ENCODE measurements at regions of chr6 and their contacts with region 1.

Region 1: DNA sequence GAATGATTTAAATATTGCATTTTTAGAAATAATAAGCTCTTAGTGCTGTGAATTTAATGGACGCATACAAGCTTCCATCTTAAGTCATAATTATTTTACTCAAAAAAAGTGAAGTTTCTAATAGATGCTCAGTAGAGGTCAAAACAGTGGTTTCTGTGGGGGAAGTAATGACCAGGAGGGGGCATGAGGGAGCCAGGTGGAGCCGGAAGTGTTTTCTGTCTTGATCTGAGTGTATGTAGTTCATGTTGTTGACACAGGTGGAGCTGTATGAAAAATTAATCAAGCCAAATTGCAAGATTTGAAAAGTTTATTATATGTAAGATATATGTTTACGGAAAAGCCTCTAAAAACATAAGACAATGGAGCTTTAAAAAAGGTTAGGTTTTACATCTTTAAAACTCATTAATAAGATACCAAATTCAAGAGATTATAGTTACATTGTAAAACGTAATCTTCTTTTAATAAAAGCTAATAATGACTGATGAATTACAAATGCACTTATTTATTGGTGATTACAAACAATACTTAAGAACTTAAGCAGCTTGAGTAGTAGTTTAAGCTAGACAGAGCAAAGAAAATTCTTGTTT is 68.0 kb downstream of the PLAGL1 start:
- DNase-seq: peak; percentile 30
- ATAC-seq: peak; percentile 99
- H3K4me3 ChIP-seq: no peak overlapping the region
- H3K27ac ChIP-seq: no peak overlapping the region
- H3K4me1 ChIP-seq: peaks cover 5% of the 10 kb centered on the region; the same call in 1 of the 2 replicates
- H3K27me3 ChIP-seq: no peaks in the 10 kb centered on the region
- CTCF ChIP-seq: peak; percentile 77 to 85 (median 80)
- EP300 ChIP-seq: no peak
- POLR2A ChIP-seq: no peak
- RAD21 ChIP-seq: peak; percentile 59

Region 2: DNA sequence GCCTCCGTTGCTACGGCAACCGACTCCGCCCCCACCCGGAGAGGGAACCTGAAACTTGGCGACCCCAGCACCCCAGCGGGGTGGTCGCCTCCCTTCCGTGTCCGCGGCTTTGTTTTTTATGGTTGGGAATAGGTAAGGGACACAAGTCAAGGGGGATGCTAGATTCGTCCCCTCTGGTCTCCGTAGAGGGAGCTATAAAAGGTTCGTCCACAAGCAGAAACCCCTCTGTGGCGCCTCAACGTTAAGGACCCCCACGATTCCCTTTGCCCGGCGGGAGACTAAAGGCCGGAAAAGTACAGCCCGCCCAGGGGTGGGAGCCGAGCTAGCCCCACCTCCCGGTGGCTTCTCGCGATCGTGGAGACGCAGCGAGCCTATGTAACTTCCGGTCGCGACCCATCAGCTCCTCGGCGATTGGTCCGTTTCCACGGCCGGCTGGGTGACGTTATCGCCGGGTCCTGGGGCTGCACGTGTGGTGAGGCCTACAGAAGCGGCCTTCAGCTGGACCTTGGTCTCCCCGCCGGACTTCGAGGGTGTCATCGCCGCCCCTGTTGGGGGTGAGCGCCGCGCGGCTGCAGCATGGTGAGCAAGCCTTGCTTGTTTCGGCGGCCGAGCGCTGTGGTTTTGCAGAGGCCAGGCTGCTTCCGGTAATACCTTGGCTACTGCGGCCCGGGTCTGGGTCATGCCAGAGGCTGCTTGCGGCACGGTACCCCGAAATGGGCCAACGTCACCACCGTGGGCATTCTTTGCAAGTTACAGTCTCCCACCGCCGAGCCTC is 97.0 kb before region 1 on chr6 and contains the start of gene LTV1:
- CTCF ChIA-PET with region 1: interaction called, 11 read pairs
- POLR2A ChIA-PET with region 1: no interaction called
- RAD21 ChIA-PET with region 1: interaction called, 3 read pairs
- SMC1A ChIA-PET with region 1: interaction called, 4 read pairs
- in situ Hi-C with region 1: no loop called
- intact Hi-C with region 1: no loop called
- DNase-seq: peak; percentile 81
- ATAC-seq: peak; percentile 99
- H3K4me3 ChIP-seq: peak within 1 kb of the TSS; percentile 88
- H3K27ac ChIP-seq: peak within 1 kb of the TSS; percentile 78
- H3K4me1 ChIP-seq: no peaks in the 10 kb centered on the region
- H3K27me3 ChIP-seq: no peaks in the 10 kb centered on the region
- CTCF ChIP-seq: no peak
- EP300 ChIP-seq: no peak
- POLR2A ChIP-seq: peak; percentile 85
- RAD21 ChIP-seq: no peak
- polyA plus RNA-seq, gene LTV1: 33.9 to 57.9 TPM

Region 3: DNA sequence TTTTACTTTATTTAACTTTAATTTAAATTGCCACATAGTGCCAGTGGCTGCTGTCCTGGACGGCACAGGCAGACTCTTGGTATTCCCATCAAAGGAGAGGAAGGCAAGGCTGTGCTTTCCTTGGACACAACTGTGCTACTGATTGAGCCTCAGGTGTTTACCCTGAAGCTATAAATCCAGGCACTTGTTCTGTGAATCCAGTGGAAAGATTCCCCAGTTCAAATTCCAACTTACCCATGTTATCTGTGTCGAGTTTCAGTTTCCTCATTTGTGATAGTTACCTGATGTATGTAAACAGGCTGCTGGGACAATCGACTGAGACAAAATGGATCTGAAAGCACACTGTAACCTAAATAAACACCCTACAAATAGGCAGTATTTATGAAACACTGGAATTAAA is 10.8 kb after region 1 on chr6:
- CTCF ChIA-PET with region 1: interaction called, 35 read pairs
- POLR2A ChIA-PET with region 1: no interaction called
- RAD21 ChIA-PET with region 1: interaction called, 6 read pairs
- SMC1A ChIA-PET with region 1: interaction called, 12 read pairs
- in situ Hi-C with region 1: no loop called
- intact Hi-C with region 1: no loop called
- DNase-seq: no peak
- ATAC-seq: no peak
- H3K4me3 ChIP-seq: no peak overlapping the region
- H3K27ac ChIP-seq: no peak overlapping the region
- H3K4me1 ChIP-seq: no peaks in the 10 kb centered on the region; the same call in 1 of the 2 replicates
- H3K27me3 ChIP-seq: no peaks in the 10 kb centered on the region
- CTCF ChIP-seq: no peak
- EP300 ChIP-seq: no peak
- POLR2A ChIP-seq: no peak
- RAD21 ChIP-seq: no peak

Region 4: GRCh38 chr6:143961886-143962873 is 22.1 kb after region 1 on chr6:
- CTCF ChIA-PET with region 1: interaction called, 15 read pairs
- POLR2A ChIA-PET with region 1: interaction called, 4 read pairs
- RAD21 ChIA-PET with region 1: interaction called, 5 read pairs
- SMC1A ChIA-PET with region 1: interaction called, 3 read pairs
- in situ Hi-C with region 1: no loop called
- intact Hi-C with region 1: no loop called
- DNase-seq: no peak
- ATAC-seq: no peak
- H3K4me3 ChIP-seq: no peak overlapping the region
- H3K27ac ChIP-seq: no peak overlapping the region
- H3K4me1 ChIP-seq: no peaks in the 10 kb centered on the region
- H3K27me3 ChIP-seq: no peaks in the 10 kb centered on the region
- CTCF ChIP-seq: no peak
- EP300 ChIP-seq: no peak
- POLR2A ChIP-seq: no peak
- RAD21 ChIP-seq: no peak

Region 5: DNA sequence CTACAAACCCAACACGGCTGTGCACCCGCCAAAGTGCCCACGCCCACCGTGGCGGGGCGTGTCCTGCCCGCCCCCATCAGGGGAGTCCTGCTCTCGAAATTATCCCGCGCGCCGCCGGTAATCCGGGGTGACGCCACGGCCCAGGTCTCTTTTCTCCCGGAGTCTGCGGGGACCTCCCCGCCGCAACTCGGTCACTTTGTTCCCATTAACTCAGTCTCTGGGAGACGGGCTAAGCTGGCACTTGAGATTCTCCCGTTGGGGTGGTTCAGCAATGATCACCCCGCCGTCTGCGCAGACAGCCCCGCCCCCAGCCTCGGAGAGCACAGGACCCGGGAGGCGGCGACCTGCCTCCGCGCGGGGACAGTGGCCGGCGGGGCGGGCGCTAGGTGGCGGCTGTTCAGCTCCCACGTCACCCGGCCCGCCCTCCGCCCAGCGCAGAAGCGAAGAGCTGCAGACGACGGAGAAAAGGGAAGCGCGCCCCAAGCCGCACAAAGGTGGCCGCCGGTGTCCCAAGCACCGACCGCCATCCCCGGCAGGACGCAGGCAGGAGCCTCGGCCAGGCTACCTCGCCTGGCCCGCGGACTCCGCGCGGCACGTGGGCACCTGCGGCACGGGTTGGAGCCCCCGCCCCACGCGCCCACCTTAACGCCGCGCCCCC is 123.8 kb after region 1 on chr6:
- CTCF ChIA-PET with region 1: interaction called, 16 read pairs
- POLR2A ChIA-PET with region 1: interaction called, 4 read pairs
- RAD21 ChIA-PET with region 1: interaction called, 4 read pairs
- SMC1A ChIA-PET with region 1: interaction called, 4 read pairs
- in situ Hi-C with region 1: no loop called
- intact Hi-C with region 1: no loop called
- DNase-seq: peak; percentile 59
- ATAC-seq: peak; percentile 90
- H3K4me3 ChIP-seq: peak overlapping the region; percentile 85
- H3K27ac ChIP-seq: peak overlapping the region; percentile 94
- H3K4me1 ChIP-seq: peaks cover 10% of the 10 kb centered on the region
- H3K27me3 ChIP-seq: no peaks in the 10 kb centered on the region
- CTCF ChIP-seq: peak; percentile 13 to 41 (median 16); a peak in 3 of 6 replicates
- EP300 ChIP-seq: no peak
- POLR2A ChIP-seq: peak; percentile 97
- RAD21 ChIP-seq: no peak

Region 6: DNA sequence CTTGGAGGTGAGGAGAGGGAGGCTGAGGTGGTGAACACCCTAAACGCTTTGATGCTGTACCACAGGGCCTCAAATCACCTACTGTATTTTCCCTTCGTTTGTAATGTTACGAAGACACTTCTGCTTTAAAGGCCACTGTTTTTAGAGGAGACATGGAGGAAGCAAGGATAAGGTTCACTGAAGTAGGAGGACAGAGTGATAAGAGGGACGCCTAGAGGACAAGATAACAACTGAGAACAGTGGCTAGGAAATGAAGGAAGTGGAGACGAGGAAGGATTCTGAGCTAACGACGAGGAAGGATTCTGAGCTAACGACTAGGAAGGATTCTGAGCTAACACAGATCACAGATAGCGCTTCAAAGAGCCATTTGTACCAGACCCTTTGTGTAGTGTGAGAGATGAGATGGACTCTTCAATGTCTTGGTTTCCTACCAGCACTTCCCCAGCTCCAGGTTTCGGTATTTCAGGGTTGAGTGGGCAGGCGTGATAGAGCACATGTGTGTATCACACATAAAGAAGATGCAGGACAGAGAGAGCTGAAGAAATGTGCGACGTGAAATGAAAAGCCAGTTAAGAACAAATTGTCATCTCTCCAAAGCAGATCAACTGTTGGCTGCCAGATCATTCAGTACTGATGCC is 147.8 kb after region 1 on chr6:
- CTCF ChIA-PET with region 1: interaction called, 244 read pairs
- POLR2A ChIA-PET with region 1: no interaction called
- RAD21 ChIA-PET with region 1: interaction called, 119 read pairs
- SMC1A ChIA-PET with region 1: interaction called, 112 read pairs
- in situ Hi-C with region 1: loop called (anchors 5 kb)
- intact Hi-C with region 1: loop called (anchors 1 kb)
- DNase-seq: no peak
- ATAC-seq: peak; percentile 68
- H3K4me3 ChIP-seq: no peak overlapping the region
- H3K27ac ChIP-seq: no peak overlapping the region
- H3K4me1 ChIP-seq: peaks cover 9% of the 10 kb centered on the region
- H3K27me3 ChIP-seq: no peaks in the 10 kb centered on the region
- CTCF ChIP-seq: peak; percentile 31 to 54 (median 32); a peak in 5 of 6 replicates
- EP300 ChIP-seq: no peak
- POLR2A ChIP-seq: no peak
- RAD21 ChIP-seq: peak; percentile 46